T-cell (primary cell): ENCODE measurements at regions of chrX and their contacts with region 1.

Region 1: DNA sequence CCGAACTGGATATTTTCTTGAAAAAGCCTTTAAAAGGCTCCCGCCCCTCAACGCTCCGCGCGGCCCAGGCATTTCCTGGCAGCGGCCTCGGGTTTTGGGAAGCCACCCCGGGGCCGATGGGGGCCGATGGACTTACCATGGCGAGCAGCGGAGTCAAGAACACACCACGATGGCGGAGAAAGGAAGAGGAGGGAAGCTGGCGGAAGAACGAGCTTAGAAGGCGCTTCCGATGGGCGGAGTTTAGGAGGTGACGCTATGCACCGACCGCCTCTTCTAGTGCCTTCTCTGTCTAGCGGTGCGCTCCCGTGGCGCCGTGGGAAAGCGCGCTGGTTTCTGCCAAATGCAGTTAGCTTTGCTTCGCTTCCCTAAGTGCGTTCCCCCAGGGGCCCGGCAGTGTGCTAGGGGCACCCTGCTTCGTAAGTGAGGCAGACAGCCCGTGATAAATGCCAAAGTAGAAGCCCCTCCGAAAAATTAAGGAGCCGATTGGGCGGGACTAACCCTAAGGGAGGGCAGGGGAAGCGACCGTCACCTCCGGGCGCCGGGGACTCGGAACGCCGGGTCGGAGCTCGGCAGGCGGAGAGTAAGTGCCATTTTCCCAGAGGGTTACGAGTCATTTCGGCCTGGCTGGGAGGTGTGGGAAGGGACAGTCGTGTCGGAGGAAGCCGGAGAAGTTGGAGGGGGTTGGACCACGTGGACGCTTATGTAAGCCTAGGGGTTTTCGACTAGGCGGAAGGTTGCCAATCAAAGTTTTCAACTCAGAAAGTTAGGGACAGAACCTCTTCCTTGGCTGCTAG is at the start of gene RPL39:
- DNase-seq: peak; percentile 46 to 91 (median 80)
- ATAC-seq: peak; percentile 94 to 96 (median 94)
- H3K4me3 ChIP-seq: peak within 1 kb of the TSS; percentile 85 to 95
- H3K4me3 Mint-ChIP-seq: peak within 1 kb of the TSS; percentile 92 to 94 (median 93)
- H3K27ac ChIP-seq: peak within 1 kb of the TSS; percentile 97
- H3K27ac Mint-ChIP-seq: peak within 1 kb of the TSS; percentile 92 to 94
- H3K4me1 ChIP-seq: peaks cover 7 to 35% of the 10 kb centered on the region in 2 experiments
- H3K4me1 Mint-ChIP-seq: peaks cover 22 to 39% (median 37%) of the 10 kb centered on the region in 3 donors
- H3K27me3 ChIP-seq: no peaks in the 10 kb centered on the region
- H3K27me3 Mint-ChIP-seq: peaks cover 0 to 3% of the 10 kb centered on the region in 2 donors
- total RNA-seq, gene RPL39: 2,957 to 4,080 (median 3,439) TPM

Region 2: GRCh38 chrX:119606280-119607015 is 185.2 kb before region 1 on chrX and contains the start of gene NKRF:
- CTCF ChIA-PET with region 1: no interaction called
- POLR2A ChIA-PET with region 1: interaction called in 1 of 2 experiments, 11 read pairs
- DNase-seq: peak; percentile 78 to 95 (median 87)
- ATAC-seq: peak; percentile 81 to 84 (median 82)
- H3K4me3 ChIP-seq: peak within 1 kb of the TSS; percentile 72 to 92
- H3K4me3 Mint-ChIP-seq: peak within 1 kb of the TSS; percentile 89 to 93 (median 89)
- H3K27ac ChIP-seq: peak within 1 kb of the TSS; percentile 97
- H3K27ac Mint-ChIP-seq: peak within 1 kb of the TSS; percentile 94
- H3K4me1 ChIP-seq: peaks cover 3 to 19% of the 10 kb centered on the region in 2 experiments
- H3K4me1 Mint-ChIP-seq: peaks cover 36 to 47% (median 36%) of the 10 kb centered on the region in 3 donors
- H3K27me3 ChIP-seq: no peaks in the 10 kb centered on the region
- H3K27me3 Mint-ChIP-seq: no peaks in the 10 kb centered on the region
- total RNA-seq, gene NKRF: 13.0 to 14.2 (median 13.7) TPM

Region 3: DNA sequence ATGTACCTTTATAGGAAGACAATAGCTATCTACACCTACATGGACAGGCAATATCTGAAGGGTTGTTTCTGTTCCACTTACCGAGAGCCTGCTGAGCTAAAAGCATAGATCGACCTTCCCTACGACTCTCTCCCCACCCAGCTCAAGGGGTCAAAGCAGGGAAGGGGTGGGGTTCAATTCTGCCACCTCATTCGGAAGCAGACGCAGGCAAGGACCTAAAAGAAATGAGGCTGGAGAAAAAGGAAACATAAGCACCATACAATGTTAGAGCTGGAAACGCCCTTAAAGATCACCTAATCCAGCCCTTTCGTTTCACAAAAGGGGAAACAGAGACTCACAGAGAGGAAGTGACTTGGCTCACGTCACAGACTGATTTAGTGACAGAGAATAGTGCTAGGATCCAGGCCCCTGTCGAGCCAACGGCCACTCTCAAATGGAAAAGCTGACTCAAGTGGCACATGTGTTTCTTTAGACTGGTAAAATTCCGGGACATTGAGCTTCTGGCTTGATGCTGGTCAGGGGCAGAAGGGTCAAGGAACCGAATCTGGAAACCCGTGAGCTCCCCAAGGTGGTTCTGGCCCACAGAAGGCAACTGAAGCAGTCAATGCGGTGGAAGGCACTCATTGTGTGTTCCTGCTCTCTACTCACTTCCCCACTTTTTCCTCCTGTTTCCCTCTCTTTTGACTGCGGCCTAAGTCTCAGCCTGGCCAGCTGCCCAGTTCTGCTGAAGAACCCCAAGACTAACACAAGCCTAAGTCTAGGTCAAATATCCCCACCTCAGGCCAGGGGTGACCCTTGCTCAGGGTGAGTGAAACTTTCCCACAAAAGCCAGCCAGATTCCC is 106.2 kb before region 1 on chrX:
- CTCF ChIA-PET with region 1: no interaction called
- POLR2A ChIA-PET with region 1: interaction called, 11 to 16 read pairs
- DNase-seq: peak in 9 of 35 experiments; percentile 23 to 71 (median 39)
- ATAC-seq: peak in 3 of 4 experiments; percentile 10 to 46 (median 11)
- H3K4me3 ChIP-seq: peak overlapping the region; percentile 34 to 38
- H3K4me3 Mint-ChIP-seq: peak overlapping the region; percentile 93 to 96 (median 94)
- H3K27ac ChIP-seq: peak overlapping the region; percentile 99
- H3K27ac Mint-ChIP-seq: peak overlapping the region; percentile 94 to 98
- H3K4me1 ChIP-seq: peaks cover 71 to 88% of the 10 kb centered on the region in 2 experiments
- H3K4me1 Mint-ChIP-seq: peaks cover 77 to 94% (median 86%) of the 10 kb centered on the region in 3 donors
- H3K27me3 ChIP-seq: no peaks in the 10 kb centered on the region
- H3K27me3 Mint-ChIP-seq: no peaks in the 10 kb centered on the region

Region 4: GRCh38 chrX:119693040-119693995 is 98.3 kb before region 1 on chrX and contains the start of gene SEPTIN6:
- CTCF ChIA-PET with region 1: no interaction called
- POLR2A ChIA-PET with region 1: interaction called, 11 to 16 read pairs
- DNase-seq: peak; percentile 74 to 91 (median 83)
- ATAC-seq: peak; percentile 71 to 75 (median 74)
- H3K4me3 ChIP-seq: peak within 1 kb of the TSS; percentile 84 to 95
- H3K4me3 Mint-ChIP-seq: peak within 1 kb of the TSS; percentile 93 to 96 (median 94)
- H3K27ac ChIP-seq: peak within 1 kb of the TSS; percentile 68
- H3K27ac Mint-ChIP-seq: peak within 1 kb of the TSS; percentile 94 to 98
- H3K4me1 ChIP-seq: peaks cover 16 to 30% of the 10 kb centered on the region in 2 experiments
- H3K4me1 Mint-ChIP-seq: peaks cover 31 to 48% (median 33%) of the 10 kb centered on the region in 3 donors
- H3K27me3 ChIP-seq: no peaks in the 10 kb centered on the region
- H3K27me3 Mint-ChIP-seq: no peaks in the 10 kb centered on the region
- total RNA-seq, gene SEPTIN6: 171 to 269 (median 206) TPM

Region 5: GRCh38 chrX:119826399-119826959 is 34.8 kb after region 1 on chrX:
- CTCF ChIA-PET with region 1: interaction called in 1 of 2 experiments, 5 read pairs
- POLR2A ChIA-PET with region 1: interaction called in 1 of 2 experiments, 20 read pairs
- DNase-seq: no peak
- ATAC-seq: no peak
- H3K4me3 ChIP-seq: no peak overlapping the region
- H3K4me3 Mint-ChIP-seq: no peak overlapping the region
- H3K27ac ChIP-seq: no peak overlapping the region
- H3K27ac Mint-ChIP-seq: peak overlapping the region in 1 of 2 donors; percentile 28
- H3K4me1 ChIP-seq: peaks cover 0 to 1% of the 10 kb centered on the region in 2 experiments
- H3K4me1 Mint-ChIP-seq: peaks cover 12 to 17% (median 16%) of the 10 kb centered on the region in 3 donors
- H3K27me3 ChIP-seq: no peaks in the 10 kb centered on the region
- H3K27me3 Mint-ChIP-seq: peaks cover 0 to 3% of the 10 kb centered on the region in 2 donors

Region 6: DNA sequence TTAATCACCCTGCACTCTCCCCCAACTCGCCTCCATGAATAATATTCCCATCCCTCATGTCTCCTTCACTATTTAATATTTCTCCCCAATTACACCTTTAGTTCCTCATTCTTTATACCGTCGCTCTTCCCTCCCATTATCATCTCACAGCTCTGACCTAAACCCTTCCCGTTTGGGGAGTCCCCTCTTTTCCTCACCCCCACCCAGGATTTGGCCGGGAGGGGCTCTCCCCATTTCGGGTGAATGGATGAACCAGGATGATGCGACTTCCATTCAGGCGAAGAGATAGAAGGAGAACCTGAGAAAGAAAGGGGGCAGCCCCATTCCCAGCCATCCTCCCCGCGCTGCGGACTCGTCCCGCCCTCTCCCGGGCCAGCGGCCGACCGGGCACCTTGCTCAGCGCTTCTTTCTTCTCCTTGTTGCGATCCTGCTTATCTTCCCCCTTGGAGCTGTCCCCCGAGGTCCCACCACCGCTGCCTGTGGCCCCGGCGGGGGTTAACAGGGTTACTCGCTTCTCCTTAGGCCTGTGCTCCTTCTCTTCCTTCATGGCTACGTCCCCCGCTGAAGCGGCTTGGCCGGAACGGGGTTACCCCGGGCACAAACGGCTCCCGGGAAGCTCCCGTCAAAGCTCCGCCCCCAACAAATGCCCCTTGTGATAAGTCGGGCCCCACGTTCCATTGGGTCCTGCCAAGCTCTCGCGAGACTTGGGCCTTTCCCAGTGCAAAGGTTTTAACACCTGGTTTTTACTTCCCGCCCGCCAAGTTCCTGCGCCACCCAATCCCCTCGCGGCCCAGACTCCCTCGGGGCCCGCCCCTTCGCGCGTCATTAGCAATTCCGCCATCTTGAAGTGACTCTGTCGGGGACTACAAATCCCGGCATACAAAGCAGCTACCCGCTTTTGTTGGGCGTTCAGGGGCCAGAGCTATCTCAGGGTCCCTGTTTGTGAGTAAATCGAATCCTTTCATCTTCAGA is 61.0 kb after region 1 on chrX and contains the start of gene UPF3B:
- CTCF ChIA-PET with region 1: interaction called in 1 of 2 experiments, 8 read pairs
- POLR2A ChIA-PET with region 1: interaction called, 3 to 16 read pairs
- DNase-seq: peak; percentile 82 to 96 (median 93)
- ATAC-seq: peak; percentile 94 to 99 (median 98)
- H3K4me3 ChIP-seq: peak within 1 kb of the TSS; percentile 75 to 93
- H3K4me3 Mint-ChIP-seq: peak within 1 kb of the TSS; percentile 99
- H3K27ac ChIP-seq: peak within 1 kb of the TSS; percentile 94
- H3K27ac Mint-ChIP-seq: peak within 1 kb of the TSS; percentile 97 to 98
- H3K4me1 ChIP-seq: peaks cover 3 to 12% of the 10 kb centered on the region in 2 experiments
- H3K4me1 Mint-ChIP-seq: peaks cover 14 to 22% (median 16%) of the 10 kb centered on the region in 3 donors
- H3K27me3 ChIP-seq: no peaks in the 10 kb centered on the region
- H3K27me3 Mint-ChIP-seq: peaks cover 0 to 24% of the 10 kb centered on the region in 2 donors
- total RNA-seq, gene UPF3B: 7.2 to 11.8 (median 9.6) TPM

Region 7: GRCh38 chrX:119871599-119872395 is 80.2 kb after region 1 on chrX and contains the starts of genes NDUFA1 and RNF113A:
- CTCF ChIA-PET with region 1: interaction called, 5 to 15 read pairs
- POLR2A ChIA-PET with region 1: interaction called, 5 to 28 read pairs
- DNase-seq: peak; percentile 62 to 92 (median 84)
- ATAC-seq: peak; percentile 90 to 95 (median 90)
- H3K4me3 ChIP-seq: peak within 1 kb of the TSS; percentile 69 to 84
- H3K4me3 Mint-ChIP-seq: peak within 1 kb of the TSS; percentile 93 to 100 (median 100)
- H3K27ac ChIP-seq: peak within 1 kb of the TSS; percentile 96
- H3K27ac Mint-ChIP-seq: peak within 1 kb of the TSS; percentile 97 to 100
- H3K4me1 ChIP-seq: peaks cover 2 to 20% of the 10 kb centered on the region in 2 experiments
- H3K4me1 Mint-ChIP-seq: peaks cover 14 to 37% (median 35%) of the 10 kb centered on the region in 3 donors
- H3K27me3 ChIP-seq: no peaks in the 10 kb centered on the region
- H3K27me3 Mint-ChIP-seq: no peaks in the 10 kb centered on the region
- total RNA-seq, gene NDUFA1: 56.3 to 60.8 (median 58.0) TPM
- total RNA-seq, gene RNF113A: 23.4 to 40.5 (median 36.5) TPM

Region 8: GRCh38 chrX:119887721-119888425 is 96.2 kb after region 1 on chrX:
- CTCF ChIA-PET with region 1: no interaction called
- POLR2A ChIA-PET with region 1: no interaction called
- DNase-seq: peak in 33 of 35 experiments; percentile 5 to 67 (median 38)
- ATAC-seq: peak; percentile 68 to 82 (median 77)
- H3K4me3 ChIP-seq: peak overlapping the region in 1 of 2 donors; percentile 30
- H3K4me3 Mint-ChIP-seq: peak overlapping the region; percentile 13 to 54 (median 28)
- H3K27ac ChIP-seq: no peak overlapping the region
- H3K27ac Mint-ChIP-seq: no peak overlapping the region
- H3K4me1 ChIP-seq: peaks cover 0 to 18% of the 10 kb centered on the region in 2 experiments
- H3K4me1 Mint-ChIP-seq: peaks cover 9 to 12% (median 10%) of the 10 kb centered on the region in 3 donors
- H3K27me3 ChIP-seq: peaks cover 0 to 11% of the 10 kb centered on the region in 2 experiments
- H3K27me3 Mint-ChIP-seq: peaks cover 0 to 4% of the 10 kb centered on the region in 2 donors